Activated naive CD4-positive, alpha-beta T cell treated with anti-CD3 and anti-CD28 coated beads for 36 hours (primary cell): ENCODE measurements at regions of chrX and their contacts with region 1.

Region 1: DNA sequence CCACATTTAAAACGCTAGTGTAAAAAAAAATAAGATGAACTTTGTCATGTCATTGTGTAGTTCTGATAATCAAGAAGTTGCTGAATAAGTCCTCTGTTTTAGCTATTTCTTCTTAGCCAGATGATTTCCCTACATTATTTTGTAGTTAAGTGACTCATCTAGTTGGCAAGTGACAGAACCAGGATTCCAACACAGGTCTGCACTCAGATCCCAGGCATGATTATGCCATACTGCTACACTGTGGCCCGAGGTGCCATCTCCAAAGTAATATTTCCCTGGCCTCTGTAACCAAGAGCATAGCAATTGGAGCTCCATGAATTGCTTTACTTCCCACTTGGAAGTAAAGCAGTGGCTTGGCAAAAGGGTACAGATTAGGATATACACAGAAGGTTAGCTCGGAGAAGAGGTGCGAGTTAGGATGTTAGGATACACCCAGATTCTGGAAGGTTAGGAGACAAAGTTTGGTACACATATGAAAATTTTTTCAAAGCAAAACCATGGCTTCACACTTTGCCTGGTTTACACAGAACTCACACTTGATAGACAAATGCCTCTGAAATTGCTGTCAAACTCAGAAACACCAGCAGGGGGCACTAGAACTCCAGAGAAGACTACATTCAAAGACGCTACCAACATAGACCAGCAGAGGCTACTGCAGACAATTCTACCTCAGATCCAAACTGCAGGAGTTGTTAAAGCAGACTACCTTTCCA is 41.4 kb downstream of the SRPX2 start:
- DNase-seq: peak; percentile 82
- H3K4me3 Mint-ChIP-seq: no peak overlapping the region
- H3K27ac Mint-ChIP-seq: no peak overlapping the region
- H3K4me1 Mint-ChIP-seq: peaks cover 16% of the 10 kb centered on the region
- H3K27me3 Mint-ChIP-seq: no peaks in the 10 kb centered on the region

Region 2: DNA sequence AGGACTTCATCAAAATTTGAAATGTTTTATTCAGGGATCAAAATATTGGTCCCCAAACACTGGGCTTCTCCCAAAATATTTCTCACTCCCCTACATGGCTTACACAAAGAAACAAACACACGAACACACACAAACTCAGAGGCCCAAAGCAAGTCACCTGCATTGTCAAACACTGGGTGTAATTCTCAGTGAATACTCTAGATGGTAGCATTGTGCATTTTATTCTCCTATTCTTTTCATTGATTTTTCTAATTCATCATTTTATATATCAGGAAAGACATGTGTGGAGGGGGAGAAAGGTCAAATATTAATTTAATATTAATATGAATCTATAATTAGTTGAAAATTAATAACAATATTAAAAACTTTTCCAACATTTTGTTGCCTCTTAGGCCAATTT is 173.0 kb before region 1 on chrX:
- CTCF ChIA-PET with region 1: interaction called, 5 read pairs
- intact Hi-C with region 1: loop called (anchors 2 kb)
- DNase-seq: no peak
- H3K4me3 Mint-ChIP-seq: no peak overlapping the region
- H3K27ac Mint-ChIP-seq: no peak overlapping the region
- H3K4me1 Mint-ChIP-seq: no peaks in the 10 kb centered on the region
- H3K27me3 Mint-ChIP-seq: no peaks in the 10 kb centered on the region

Region 3: DNA sequence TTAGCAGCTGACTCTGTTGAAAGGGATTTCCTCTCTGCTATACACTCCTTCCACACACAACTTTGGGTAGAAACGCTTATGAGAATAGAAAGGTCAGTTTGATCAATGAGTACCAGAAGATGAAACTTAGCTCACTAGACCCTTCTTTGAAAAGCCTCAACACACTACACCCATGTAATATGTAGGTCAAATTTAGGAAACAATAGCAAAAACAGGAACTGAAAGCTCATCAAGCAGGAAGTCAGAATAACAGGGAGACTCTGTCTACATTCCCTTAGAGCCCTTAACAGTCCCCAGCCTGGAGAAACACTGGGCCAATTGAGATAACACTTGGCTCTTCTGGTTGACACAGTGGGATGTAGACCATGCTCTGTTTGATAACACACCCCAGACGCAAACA is 10.7 kb before region 1 on chrX:
- CTCF ChIA-PET with region 1: interaction called, 4 read pairs
- intact Hi-C with region 1: loop called (anchors 1 kb)
- DNase-seq: no peak
- H3K4me3 Mint-ChIP-seq: no peak overlapping the region
- H3K27ac Mint-ChIP-seq: no peak overlapping the region
- H3K4me1 Mint-ChIP-seq: peaks cover 6% of the 10 kb centered on the region
- H3K27me3 Mint-ChIP-seq: no peaks in the 10 kb centered on the region

Region 4: GRCh38 chrX:100768679-100769338 is 83.4 kb after region 1 on chrX:
- CTCF ChIA-PET with region 1: interaction called, 118 read pairs
- intact Hi-C with region 1: loop called (anchors 1 kb)
- DNase-seq: peak; percentile 92
- H3K4me3 Mint-ChIP-seq: no peak overlapping the region
- H3K27ac Mint-ChIP-seq: no peak overlapping the region
- H3K4me1 Mint-ChIP-seq: no peaks in the 10 kb centered on the region
- H3K27me3 Mint-ChIP-seq: peaks cover 9% of the 10 kb centered on the region

Region 5: GRCh38 chrX:101206471-101206870 is 521.0 kb after region 1 on chrX:
- CTCF ChIA-PET with region 1: no interaction called
- intact Hi-C with region 1: loop called (anchors 2 kb)
- DNase-seq: peak; percentile 16
- H3K4me3 Mint-ChIP-seq: no peak overlapping the region
- H3K27ac Mint-ChIP-seq: no peak overlapping the region
- H3K4me1 Mint-ChIP-seq: peaks cover 18% of the 10 kb centered on the region
- H3K27me3 Mint-ChIP-seq: no peaks in the 10 kb centered on the region

Region 6: DNA sequence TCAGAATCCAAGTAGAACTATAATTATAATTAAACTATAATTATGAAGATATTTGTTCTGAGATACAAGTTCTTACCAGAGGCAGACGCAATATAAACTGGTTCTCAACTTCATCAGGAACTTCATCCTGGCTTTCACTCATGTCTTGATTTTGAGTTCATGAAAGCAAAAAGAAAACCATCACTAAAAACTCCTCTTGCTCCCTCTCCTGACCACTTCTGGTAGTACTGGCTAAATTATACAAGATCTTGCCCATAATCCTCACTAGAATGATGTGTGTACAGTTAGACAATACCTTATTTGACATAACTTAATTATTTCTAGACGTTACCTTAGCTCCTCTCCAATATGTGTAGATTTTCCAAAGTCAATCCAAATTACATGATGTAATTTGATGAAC is 602.0 kb after region 1 on chrX:
- CTCF ChIA-PET with region 1: interaction called, 4 read pairs
- intact Hi-C with region 1: loop called (anchors 1 kb)
- DNase-seq: peak; percentile 6
- H3K4me3 Mint-ChIP-seq: no peak overlapping the region
- H3K27ac Mint-ChIP-seq: no peak overlapping the region
- H3K4me1 Mint-ChIP-seq: no peaks in the 10 kb centered on the region
- H3K27me3 Mint-ChIP-seq: peaks cover 1% of the 10 kb centered on the region